Caco-2 (cell line): ENCODE measurements at regions of chr12 and their contacts with region 1.

Region 1: DNA sequence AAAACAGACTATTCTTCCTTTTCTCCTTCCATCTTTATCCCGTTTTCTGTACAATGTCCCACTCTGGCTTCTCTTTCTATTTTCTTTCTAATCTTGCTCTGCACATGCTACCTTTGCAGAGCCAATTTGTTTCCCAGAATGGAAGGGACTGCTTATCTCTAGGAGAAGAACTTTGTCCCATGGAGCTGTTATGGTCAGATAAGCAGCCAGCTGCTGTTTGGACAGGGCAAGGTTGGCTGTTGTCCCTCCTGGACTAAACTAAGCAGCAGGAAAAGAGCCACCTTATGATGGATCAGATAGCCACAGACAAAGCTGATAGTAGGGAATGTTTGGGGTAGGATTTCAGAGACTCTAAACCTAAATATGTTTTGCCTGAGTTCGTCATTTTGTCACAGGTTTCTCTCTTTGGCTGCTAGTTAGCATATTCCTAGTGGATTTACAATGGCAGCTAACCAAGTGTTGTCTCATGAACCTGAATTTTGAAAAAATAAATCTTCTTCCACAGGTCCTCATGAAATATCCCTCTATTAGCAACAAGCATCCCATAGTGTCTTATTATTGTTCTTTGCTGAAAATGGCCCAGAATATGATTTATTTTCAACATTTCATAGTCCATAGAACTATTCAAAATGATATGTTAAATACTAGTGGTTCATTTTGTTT is 262.8 kb downstream of the SLC16A7 start:
- DNase-seq: peak; percentile 72 to 86
- H3K4me3 ChIP-seq: no peak overlapping the region
- H3K4me3 Mint-ChIP-seq: peak overlapping the region; percentile 13
- H3K27ac Mint-ChIP-seq: no peak overlapping the region
- H3K4me1 ChIP-seq: peaks cover 33% of the 10 kb centered on the region
- H3K4me1 Mint-ChIP-seq: peaks cover 27% of the 10 kb centered on the region
- H3K27me3 ChIP-seq: no peaks in the 10 kb centered on the region
- H3K27me3 Mint-ChIP-seq: no peaks in the 10 kb centered on the region
- CTCF ChIP-seq: no peak

Region 2: DNA sequence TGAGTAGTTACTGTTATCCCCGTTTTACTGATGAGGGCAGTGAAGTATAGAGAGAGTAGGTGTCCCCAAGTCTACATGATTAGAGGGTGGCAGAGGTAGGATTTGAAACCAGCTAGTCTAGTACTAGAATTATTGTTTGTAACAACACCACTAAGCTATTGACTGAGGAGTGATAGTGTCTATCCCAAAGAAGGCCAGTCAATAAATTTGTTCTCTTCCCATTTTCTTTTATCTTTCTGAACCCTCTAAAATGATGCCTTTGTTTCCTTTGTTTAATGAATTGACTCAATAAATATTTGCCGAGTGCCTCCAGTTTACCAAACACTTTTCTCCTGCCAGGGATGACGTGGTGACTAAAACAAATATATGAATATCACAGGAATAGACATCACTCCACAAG is 15.3 kb before region 1 on chr12:
- CTCF ChIA-PET with region 1: no interaction called
- POLR2A ChIA-PET with region 1: no interaction called
- intact Hi-C with region 1: no loop called
- DNase-seq: no peak
- H3K4me3 ChIP-seq: no peak overlapping the region
- H3K4me3 Mint-ChIP-seq: no peak overlapping the region
- H3K27ac Mint-ChIP-seq: no peak overlapping the region
- H3K4me1 ChIP-seq: no peaks in the 10 kb centered on the region
- H3K4me1 Mint-ChIP-seq: peaks cover 9% of the 10 kb centered on the region
- H3K27me3 ChIP-seq: no peaks in the 10 kb centered on the region
- H3K27me3 Mint-ChIP-seq: no peaks in the 10 kb centered on the region
- CTCF ChIP-seq: no peak

Region 3: GRCh38 chr12:59916988-59917387 is 58.3 kb after region 1 on chr12:
- CTCF ChIA-PET with region 1: no interaction called
- POLR2A ChIA-PET with region 1: no interaction called
- intact Hi-C with region 1: loop called (anchors 5 kb)
- DNase-seq: no peak
- H3K4me3 ChIP-seq: no peak overlapping the region
- H3K4me3 Mint-ChIP-seq: no peak overlapping the region
- H3K27ac Mint-ChIP-seq: no peak overlapping the region
- H3K4me1 ChIP-seq: no peaks in the 10 kb centered on the region
- H3K4me1 Mint-ChIP-seq: no peaks in the 10 kb centered on the region
- H3K27me3 ChIP-seq: no peaks in the 10 kb centered on the region
- H3K27me3 Mint-ChIP-seq: no peaks in the 10 kb centered on the region
- CTCF ChIP-seq: no peak

Region 4: DNA sequence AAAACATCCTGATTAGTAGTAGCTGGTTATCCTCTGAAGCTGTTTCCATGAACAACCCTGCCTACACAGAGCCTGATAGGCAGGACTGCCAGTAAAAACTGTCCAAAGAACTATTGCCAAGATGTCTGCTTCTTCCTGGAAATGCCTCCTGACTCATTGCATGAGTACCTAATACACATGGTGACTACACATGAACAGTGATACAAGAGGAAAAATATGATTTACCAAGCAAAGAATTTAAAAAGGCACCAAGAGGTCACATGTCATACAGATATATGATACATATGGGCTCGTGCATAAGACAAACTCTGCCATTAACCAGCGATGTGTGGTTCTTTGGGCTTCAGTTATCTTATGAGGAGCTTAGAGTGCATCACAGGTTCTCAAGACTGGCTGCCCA is 289.5 kb after region 1 on chr12:
- CTCF ChIA-PET with region 1: no interaction called
- POLR2A ChIA-PET with region 1: no interaction called
- intact Hi-C with region 1: loop called (anchors 10 kb)
- DNase-seq: no peak
- H3K4me3 ChIP-seq: no peak overlapping the region
- H3K4me3 Mint-ChIP-seq: no peak overlapping the region
- H3K27ac Mint-ChIP-seq: no peak overlapping the region
- H3K4me1 ChIP-seq: no peaks in the 10 kb centered on the region
- H3K4me1 Mint-ChIP-seq: no peaks in the 10 kb centered on the region
- H3K27me3 ChIP-seq: no peaks in the 10 kb centered on the region
- H3K27me3 Mint-ChIP-seq: no peaks in the 10 kb centered on the region
- CTCF ChIP-seq: no peak